Astrocyte of the spinal cord (primary cell): ENCODE measurements at regions of chr2 and their contacts with region 1.

Region 1: DNA sequence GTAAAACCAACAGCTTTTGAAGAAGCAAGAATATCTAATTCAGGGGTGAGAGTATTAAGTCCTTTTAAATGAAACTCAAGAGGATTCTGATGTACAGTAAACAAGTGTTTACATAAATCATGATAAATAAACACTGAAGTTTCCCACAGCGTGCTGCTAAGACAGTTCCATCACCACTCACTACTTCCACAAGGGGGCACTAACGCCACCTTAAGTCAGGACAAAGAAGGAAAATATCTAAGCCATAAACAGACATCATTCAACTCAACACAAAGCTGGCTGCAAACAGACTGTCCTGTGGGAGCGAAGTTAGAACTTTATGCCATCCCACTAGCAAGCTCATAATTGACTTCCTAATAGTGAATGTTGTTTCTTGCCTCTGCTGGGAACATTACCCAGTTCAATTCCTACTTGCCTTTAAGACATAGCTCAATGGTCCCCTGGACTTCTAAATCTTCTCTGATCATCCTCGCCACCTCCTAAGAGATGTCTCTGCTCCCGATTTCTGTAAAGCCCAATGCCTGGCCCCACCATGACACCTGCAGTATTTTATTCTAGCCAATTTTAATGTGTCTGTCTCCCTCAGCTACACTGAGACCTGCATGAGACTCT is 36.5 kb downstream of the MRPL44 start:
- DNase-seq: peak; percentile 86
- H3K4me3 ChIP-seq: no peak overlapping the region
- CTCF ChIP-seq: peak; percentile 80

Region 2: DNA sequence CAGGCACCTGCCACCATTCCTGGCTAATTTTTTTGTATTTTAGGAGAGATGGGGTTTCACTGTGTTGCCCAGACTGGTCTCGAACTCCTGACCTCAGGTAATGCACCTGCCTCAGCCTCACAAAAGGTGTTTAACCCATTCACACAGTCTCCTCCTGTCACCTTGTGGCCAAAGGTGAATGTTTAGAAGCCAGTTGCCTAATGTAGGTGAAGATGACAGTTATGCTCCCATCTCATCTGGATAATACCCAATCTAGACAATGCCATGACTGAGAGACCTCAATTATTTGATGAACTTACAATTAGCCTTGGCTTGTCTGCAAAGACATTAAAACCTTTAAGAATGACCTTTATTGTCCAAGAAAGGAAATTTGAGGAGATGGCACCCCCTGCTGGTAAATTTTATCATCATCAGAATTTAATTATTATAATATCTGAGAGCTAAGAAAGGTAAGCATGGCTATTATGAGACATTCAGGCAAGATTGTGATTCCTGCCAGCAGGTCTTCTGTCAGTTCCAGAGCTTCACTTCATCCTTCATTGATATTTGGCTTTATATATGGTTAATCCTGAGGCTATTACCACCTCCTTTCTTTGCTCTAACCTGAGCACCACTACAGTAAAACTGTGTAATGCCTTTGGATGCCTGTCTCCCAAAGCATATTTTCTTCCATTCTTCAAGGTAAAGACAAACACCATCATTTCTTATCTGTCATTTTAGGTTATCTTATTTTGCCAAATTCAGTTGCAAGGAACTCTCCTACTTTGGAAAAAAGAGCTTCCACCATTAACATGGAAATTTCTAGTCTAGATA is 290.6 kb after region 1 on chr2:
- in situ Hi-C with region 1: loop called (anchors 25 kb)
- DNase-seq: peak; percentile 37
- H3K4me3 ChIP-seq: no peak overlapping the region
- CTCF ChIP-seq: peak; percentile 67